Calu3 (cell line): ENCODE measurements at regions of chr5 and their contacts with region 1.

Region 1: GRCh38 chr5:114458726-114459125 is 96.9 kb downstream of the KCNN2 start:
- DNase-seq: no peak
- H3K4me3 Mint-ChIP-seq: no peak overlapping the region
- H3K27ac Mint-ChIP-seq: no peak overlapping the region
- H3K4me1 Mint-ChIP-seq: no peaks in the 10 kb centered on the region
- H3K27me3 Mint-ChIP-seq: peaks cover 45% of the 10 kb centered on the region
- CTCF ChIP-seq: no peak

Region 2: GRCh38 chr5:114089259-114089658 is 369.5 kb before region 1 on chr5:
- CTCF ChIA-PET with region 1: no interaction called
- intact Hi-C with region 1: no loop called
- DNase-seq: no peak
- H3K4me3 Mint-ChIP-seq: no peak overlapping the region
- H3K27ac Mint-ChIP-seq: no peak overlapping the region
- H3K4me1 Mint-ChIP-seq: no peaks in the 10 kb centered on the region
- H3K27me3 Mint-ChIP-seq: no peaks in the 10 kb centered on the region
- CTCF ChIP-seq: no peak

Region 3: GRCh38 chr5:114789773-114790402 is 331.2 kb after region 1 on chr5:
- CTCF ChIA-PET with region 1: no interaction called
- intact Hi-C with region 1: loop called (anchors 5 kb)
- DNase-seq: no peak
- H3K4me3 Mint-ChIP-seq: no peak overlapping the region
- H3K27ac Mint-ChIP-seq: no peak overlapping the region
- H3K4me1 Mint-ChIP-seq: no peaks in the 10 kb centered on the region
- H3K27me3 Mint-ChIP-seq: no peaks in the 10 kb centered on the region
- CTCF ChIP-seq: peak; percentile 19